Prostate gland (tissue), 2 donors: ENCODE measurements at regions of chr15 and their contacts with region 1.

Region 1: GRCh38 chr15:99275525-99276128 is 24.3 kb downstream of the LRRC28 start:
- DNase-seq: no peak
- H3K4me3 ChIP-seq: no peak overlapping the region
- H3K27ac ChIP-seq: no peak overlapping the region
- H3K4me1 ChIP-seq: no peaks in the 10 kb centered on the region
- H3K27me3 ChIP-seq: no peaks in the 10 kb centered on the region
- CTCF ChIP-seq: no peak
- POLR2A ChIP-seq: no peak

Region 2: DNA sequence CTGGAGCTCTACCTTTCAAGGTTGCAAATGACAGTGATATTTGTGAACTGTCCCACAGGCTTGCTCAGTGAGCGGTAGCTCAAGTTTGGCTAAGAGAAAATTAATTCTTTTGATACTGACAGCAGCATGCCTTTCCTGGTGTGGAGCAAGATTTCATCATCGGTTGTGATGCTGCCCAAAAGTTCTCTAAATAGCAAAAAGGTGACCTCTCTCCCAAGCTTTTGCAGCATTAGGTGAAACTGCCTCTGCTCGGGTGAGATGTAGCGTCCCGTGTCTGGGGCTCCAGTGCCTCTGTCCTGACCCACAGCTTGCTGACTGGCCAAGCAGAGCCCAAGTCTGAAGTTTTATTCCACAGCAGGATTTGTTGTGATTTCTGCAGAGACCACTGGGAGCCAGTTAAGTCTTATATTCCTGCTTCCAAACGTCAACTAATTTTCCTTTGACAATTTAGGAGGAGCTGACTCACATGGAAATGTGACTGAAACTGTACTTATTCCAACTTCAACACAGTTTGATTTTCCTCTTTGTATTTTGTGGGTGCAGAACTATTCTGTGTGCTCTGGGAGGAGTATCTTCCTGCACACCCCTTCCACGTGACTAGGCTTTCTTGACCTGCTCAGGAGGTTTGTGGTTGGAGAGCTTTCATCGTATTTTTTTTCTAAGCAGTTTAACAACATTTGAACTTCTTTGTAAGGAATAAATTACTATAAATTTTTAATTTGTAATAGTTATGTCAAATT is 164.9 kb before region 1 on chr15:
- intact Hi-C with region 1: no loop called
- DNase-seq: no peak
- H3K4me3 ChIP-seq: no peak overlapping the region
- H3K27ac ChIP-seq: peak overlapping the region; percentile 77 to 83
- H3K4me1 ChIP-seq: no peaks in the 10 kb centered on the region
- H3K27me3 ChIP-seq: no peaks in the 10 kb centered on the region
- CTCF ChIP-seq: no peak
- POLR2A ChIP-seq: no peak

Region 3: GRCh38 chr15:99755692-99756409 is 480.2 kb after region 1 on chr15:
- intact Hi-C with region 1: loop called (anchors 10 kb)
- DNase-seq: peak; percentile 55
- H3K4me3 ChIP-seq: no peak overlapping the region
- H3K27ac ChIP-seq: no peak overlapping the region
- H3K4me1 ChIP-seq: no peaks in the 10 kb centered on the region
- H3K27me3 ChIP-seq: no peaks in the 10 kb centered on the region
- CTCF ChIP-seq: peak; percentile 49 to 75 (median 62)
- POLR2A ChIP-seq: no peak